ENCODE measurements at regions of chr14 and their contacts with region 1.

Region 1: DNA sequence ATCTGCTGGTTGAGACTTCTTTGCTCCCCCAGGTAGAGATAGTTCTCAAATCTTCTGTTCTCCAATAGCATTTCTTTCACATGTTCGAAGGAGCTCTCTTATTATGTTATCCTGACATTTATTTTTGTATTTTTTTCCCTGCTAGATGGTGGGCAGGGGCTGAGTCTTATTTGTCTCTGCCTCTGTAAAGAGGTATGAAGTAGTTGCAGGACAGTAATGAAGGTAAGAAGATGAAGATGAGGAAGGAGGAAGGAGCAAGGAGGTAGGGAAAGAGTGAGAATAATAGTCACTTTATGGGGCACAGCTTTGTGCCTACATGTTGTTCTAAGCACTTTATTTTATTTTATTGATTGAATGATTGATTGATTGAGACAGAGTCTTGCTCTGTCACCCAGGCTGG is 5.0 kb upstream of the CIROP start:
- DNase-seq: no peak
- H3K4me3 Mint-ChIP-seq: no peak overlapping the region
- H3K27ac Mint-ChIP-seq: no peak overlapping the region
- H3K4me1 Mint-ChIP-seq: peaks cover 6% of the 10 kb centered on the region
- H3K27me3 Mint-ChIP-seq: peaks cover 7% of the 10 kb centered on the region

Region 2: DNA sequence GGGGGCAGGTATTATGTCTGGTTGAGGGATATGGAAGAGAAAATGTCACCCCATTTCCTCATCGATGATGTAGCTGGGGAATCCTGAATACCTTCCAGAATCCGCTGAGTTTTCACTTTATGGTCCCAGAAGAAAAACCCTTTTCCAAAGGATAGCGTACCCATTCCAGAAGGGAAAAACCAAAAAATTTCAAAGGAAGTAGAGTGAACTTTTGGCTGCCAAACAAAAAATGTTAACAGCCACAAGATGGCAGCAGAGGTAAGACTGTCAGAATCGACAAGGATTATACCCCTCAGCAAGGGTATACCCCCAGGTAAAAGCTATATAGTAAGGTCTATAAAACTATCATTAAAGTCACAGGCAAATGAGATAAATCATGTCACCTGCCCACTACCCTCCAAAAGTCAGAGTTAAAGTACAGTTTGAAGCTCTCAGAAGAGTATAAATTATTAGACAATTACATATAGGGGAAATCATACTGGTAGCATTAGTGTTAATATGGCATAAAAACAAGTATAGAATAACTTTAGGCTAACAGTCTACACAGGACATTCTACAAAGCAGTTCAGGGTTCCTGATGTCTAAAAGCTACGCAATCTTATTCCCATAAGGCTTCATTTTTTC is 32.9 kb before region 1 on chr14:
- intact Hi-C with region 1: loop called (anchors 1 kb)
- DNase-seq: no peak
- H3K4me3 Mint-ChIP-seq: no peak overlapping the region
- H3K27ac Mint-ChIP-seq: no peak overlapping the region
- H3K4me1 Mint-ChIP-seq: peaks cover 11% of the 10 kb centered on the region
- H3K27me3 Mint-ChIP-seq: no peaks in the 10 kb centered on the region